PC-9 (cell line): ENCODE measurements at regions of chr17 and their contacts with region 1.

Region 1: DNA sequence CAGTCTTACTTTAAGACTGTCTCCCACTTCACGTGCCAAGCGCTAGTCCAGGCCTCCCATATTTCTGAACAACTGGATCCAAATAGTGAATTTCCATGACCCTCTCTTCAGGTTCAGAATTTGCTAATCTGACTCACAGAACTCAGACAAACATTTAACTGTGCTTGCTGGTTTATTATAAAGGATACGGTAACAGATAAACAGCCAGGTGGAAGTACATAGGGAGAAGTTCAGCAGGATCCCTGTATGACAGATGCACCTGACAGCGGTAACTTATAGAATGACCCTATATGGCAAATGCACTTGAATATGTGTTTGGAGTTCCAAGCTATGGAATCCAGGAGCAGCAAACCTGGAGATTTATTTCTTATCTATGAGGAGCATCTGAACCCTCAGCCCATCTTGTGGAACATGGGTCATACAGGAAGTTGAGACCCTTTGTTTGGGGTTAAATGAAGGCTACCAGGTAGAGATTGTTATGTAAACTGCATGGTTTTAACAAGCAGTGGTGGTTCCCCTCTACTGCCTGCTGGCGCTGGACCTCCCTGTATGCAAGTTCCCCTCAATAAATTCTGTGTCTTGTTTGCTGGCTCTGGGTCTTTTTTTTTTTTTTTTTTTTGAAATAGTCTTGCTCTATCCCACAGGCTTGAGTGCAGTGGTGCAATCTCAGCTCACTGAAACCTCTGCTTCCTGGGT is 622.6 kb downstream of the KCNJ2 start:
- DNase-seq: no peak
- H3K4me3 ChIP-seq: no peak overlapping the region
- H3K27ac ChIP-seq: no peak overlapping the region
- H3K4me1 ChIP-seq: no peaks in the 10 kb centered on the region
- H3K27me3 ChIP-seq: no peaks in the 10 kb centered on the region
- CTCF ChIP-seq: no peak

Region 2: GRCh38 chr17:70677783-70678647 is 113.9 kb before region 1 on chr17:
- CTCF ChIA-PET with region 1: no interaction called
- POLR2A ChIA-PET with region 1: interaction called, 29 read pairs
- intact Hi-C with region 1: no loop called
- DNase-seq: no peak
- H3K4me3 ChIP-seq: no peak overlapping the region
- H3K27ac ChIP-seq: no peak overlapping the region
- H3K4me1 ChIP-seq: no peaks in the 10 kb centered on the region
- H3K27me3 ChIP-seq: no peaks in the 10 kb centered on the region
- CTCF ChIP-seq: no peak